ENCODE measurements at regions of chr14 and their contacts with region 1.

Region 1: GRCh38 chr14:67934008-67934481 is 114.5 kb downstream of the RAD51B start:
- DNase-seq: peak in 1 of 10 donors; percentile 55

Region 2: GRCh38 chr14:67680941-67681340 is 253.1 kb before region 1 on chr14:
- intact Hi-C with region 1: no loop called
- DNase-seq: no peak

Region 3: GRCh38 chr14:68843471-68844209 is 909.6 kb after region 1 on chr14:
- intact Hi-C with region 1: loop called (anchors 5 kb)
- DNase-seq: peak; percentile 59 to 96 (median 79)

Measured in posterior cingulate gyrus (tissue), 11 donors.